Posterior cingulate gyrus (tissue), 11 donors: ENCODE measurements at regions of chr7 and their contacts with region 1.

Region 1: GRCh38 chr7:94781236-94781635 is 125.3 kb upstream of the SGCE start:
- DNase-seq: no peak

Region 2: GRCh38 chr7:94395141-94396036 is 385.8 kb before region 1 on chr7:
- intact Hi-C with region 1: no loop called
- DNase-seq: peak in 1 of 10 donors; percentile 18

Region 3: DNA sequence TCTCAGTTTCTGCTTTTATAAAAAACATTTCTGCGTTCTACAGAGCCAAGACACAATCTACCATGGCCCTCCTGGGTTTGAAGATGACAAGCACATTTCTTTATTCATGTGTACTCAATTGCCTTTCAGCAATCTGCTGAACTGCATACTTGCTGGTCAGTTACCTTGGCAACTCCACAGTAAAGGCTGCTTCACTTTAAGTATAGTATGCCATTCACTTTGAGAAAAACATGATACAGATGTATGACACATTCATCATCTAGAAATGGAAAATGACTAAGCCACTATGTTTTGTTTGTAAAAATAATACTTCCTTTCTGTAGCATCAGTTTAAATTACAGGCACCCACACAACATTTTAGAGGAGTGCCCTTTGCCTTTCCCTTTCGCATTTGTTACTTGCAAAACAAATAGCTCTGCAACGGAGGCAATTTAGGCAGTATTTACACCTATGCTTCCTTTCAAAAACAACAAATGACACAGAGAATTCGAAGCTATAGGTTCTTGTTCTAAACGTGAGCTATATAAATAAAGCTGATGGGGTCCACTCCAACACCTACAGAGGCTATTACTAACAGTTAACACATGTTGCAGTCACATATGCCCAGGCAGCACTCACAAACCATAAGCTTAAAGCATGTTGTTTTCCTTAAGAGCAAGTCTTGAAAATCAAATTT is 148.8 kb before region 1 on chr7:
- intact Hi-C with region 1: no loop called
- DNase-seq: no peak

Region 4: GRCh38 chr7:94739180-94739579 is 42.1 kb before region 1 on chr7:
- intact Hi-C with region 1: loop called (anchors 5 kb)
- DNase-seq: no peak